ENCODE measurements at regions of chr22 and their contacts with region 1.

Region 1: GRCh38 chr22:27642104-27642800 is 159.3 kb downstream of the MN1 start:
- DNase-seq: peak; percentile 59 to 90
- ATAC-seq: peak; percentile 20 to 39
- H3K4me3 ChIP-seq: no peak overlapping the region
- H3K27ac ChIP-seq: peak overlapping the region; percentile 93 to 98 (median 96)
- H3K4me1 ChIP-seq: peaks cover 50 to 61% of the 10 kb centered on the region in 2 donors
- H3K27me3 ChIP-seq: no peaks in the 10 kb centered on the region
- CTCF ChIP-seq: no peak
- POLR2A ChIP-seq: peak; percentile 45 to 60

Region 2: DNA sequence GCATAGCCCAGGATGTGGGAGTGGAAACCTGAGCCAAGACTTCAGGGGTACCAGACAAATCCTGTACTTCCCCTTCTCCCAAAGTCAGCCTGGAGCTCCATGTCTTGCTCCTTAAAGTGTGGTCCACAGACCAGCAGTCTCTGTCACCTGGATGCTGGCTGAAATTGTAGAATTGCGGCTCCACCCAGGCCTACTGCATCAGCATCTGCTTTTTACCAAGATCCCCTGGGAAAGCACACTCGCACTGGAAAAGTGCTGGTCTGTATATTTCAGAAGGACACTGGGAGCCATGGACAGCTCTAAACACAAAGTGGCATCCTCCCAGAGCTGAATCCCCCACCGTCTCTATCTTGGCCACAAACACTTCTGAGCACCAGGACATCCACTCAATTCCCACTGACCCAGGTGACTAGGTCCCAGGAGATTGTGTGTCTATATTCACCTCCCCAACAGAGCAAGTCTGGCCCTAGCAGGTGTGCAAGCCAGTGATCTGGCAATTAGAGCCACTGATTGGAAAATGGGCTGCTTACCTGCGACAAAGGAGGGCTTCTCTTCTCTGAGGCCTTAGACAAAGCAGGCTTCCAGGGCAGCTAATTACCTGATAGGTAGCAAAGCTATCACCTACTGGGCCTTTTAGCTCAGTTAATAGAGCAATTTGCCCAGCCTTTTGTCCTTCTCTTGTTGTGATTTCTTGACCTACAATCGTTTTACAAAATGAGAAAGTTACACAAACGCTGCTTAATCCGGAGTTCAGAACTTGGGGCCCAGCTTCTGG is 284.0 kb before region 1 on chr22:
- in situ Hi-C with region 1: no loop called
- intact Hi-C with region 1: no loop called
- DNase-seq: no peak
- ATAC-seq: no peak
- H3K4me3 ChIP-seq: no peak overlapping the region
- H3K27ac ChIP-seq: no peak overlapping the region
- H3K4me1 ChIP-seq: no peaks in the 10 kb centered on the region
- H3K27me3 ChIP-seq: no peaks in the 10 kb centered on the region
- CTCF ChIP-seq: no peak
- POLR2A ChIP-seq: no peak

Region 3: GRCh38 chr22:27780161-27780575 is 137.9 kb after region 1 on chr22:
- in situ Hi-C with region 1: loop called in 3 of 4 experiments (anchors 10 to 25 kb)
- intact Hi-C with region 1: no loop called
- DNase-seq: no peak
- ATAC-seq: no peak
- H3K4me3 ChIP-seq: no peak overlapping the region
- H3K27ac ChIP-seq: peak overlapping the region; percentile 90 to 95 (median 94)
- H3K4me1 ChIP-seq: peaks cover 68 to 80% of the 10 kb centered on the region in 2 donors
- H3K27me3 ChIP-seq: no peaks in the 10 kb centered on the region
- CTCF ChIP-seq: no peak
- POLR2A ChIP-seq: no peak

Region 4: GRCh38 chr22:27866132-27867086 is 224.2 kb after region 1 on chr22:
- in situ Hi-C with region 1: no loop called
- intact Hi-C with region 1: loop called (anchors 10 kb)
- DNase-seq: peak; percentile 63 to 65
- ATAC-seq: peak; percentile 80 to 89
- H3K4me3 ChIP-seq: peak overlapping the region in 3 of 4 donors; percentile 5 to 16 (median 7)
- H3K27ac ChIP-seq: peak overlapping the region; percentile 77 to 88 (median 80)
- H3K4me1 ChIP-seq: peaks cover 42 to 47% of the 10 kb centered on the region in 2 donors
- H3K27me3 ChIP-seq: no peaks in the 10 kb centered on the region
- CTCF ChIP-seq: no peak
- POLR2A ChIP-seq: no peak

Measured in gastrocnemius medialis (tissue), 4 donors.